GM12878 (cell line): ENCODE measurements at regions of chr3 and their contacts with region 1.

Region 1: GRCh38 chr3:152480282-152480953 is 211.7 kb downstream of the MBNL1 start:
- DNase-seq: peak; percentile 77
- ATAC-seq: peak; percentile 86
- H3K4me3 ChIP-seq: peak overlapping the region; percentile 34; the same call in 1 of the 2 replicates
- H3K27ac ChIP-seq: peak overlapping the region; percentile 87
- H3K4me1 ChIP-seq: peaks cover 13% of the 10 kb centered on the region; the same call in 1 of the 2 replicates
- H3K27me3 ChIP-seq: no peaks in the 10 kb centered on the region
- CTCF ChIP-seq: no peak
- EP300 ChIP-seq: peak; percentile 94 to 95
- POLR2A ChIP-seq: no peak
- RAD21 ChIP-seq: no peak

Region 2: GRCh38 chr3:152193673-152194267 is 286.6 kb before region 1 on chr3:
- CTCF ChIA-PET with region 1: no interaction called
- POLR2A ChIA-PET with region 1: no interaction called
- RAD21 ChIA-PET with region 1: no interaction called
- SMC1A ChIA-PET with region 1: no interaction called
- in situ Hi-C with region 1: no loop called
- intact Hi-C with region 1: no loop called
- DNase-seq: no peak
- ATAC-seq: peak; percentile 67
- H3K4me3 ChIP-seq: peak overlapping the region; percentile 44; the same call in 1 of the 2 replicates
- H3K27ac ChIP-seq: peak overlapping the region; percentile 48; the same call in 1 of the 2 replicates
- H3K4me1 ChIP-seq: peaks cover 29% of the 10 kb centered on the region
- H3K27me3 ChIP-seq: no peaks in the 10 kb centered on the region
- CTCF ChIP-seq: no peak
- EP300 ChIP-seq: no peak
- POLR2A ChIP-seq: no peak
- RAD21 ChIP-seq: no peak; the same call in 1 of the 2 replicates

Region 3: DNA sequence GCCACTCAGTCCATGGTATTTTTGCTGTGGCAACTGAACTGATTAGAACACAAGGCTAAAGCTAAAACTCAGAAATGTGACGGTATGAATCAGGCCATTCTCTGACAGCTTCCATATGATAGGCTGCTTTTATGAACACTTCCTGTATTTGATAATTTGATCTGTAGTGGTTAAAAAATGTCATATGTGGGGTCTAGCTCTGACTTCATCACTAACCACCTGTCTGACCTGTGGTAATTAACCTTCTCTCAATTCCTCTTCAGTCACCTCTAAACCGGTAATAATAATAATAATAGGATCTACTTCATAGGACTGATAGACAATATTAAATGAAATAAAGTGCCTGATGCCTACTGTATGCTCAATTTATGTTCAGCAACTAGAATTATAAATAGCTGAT is 11.5 kb after region 1 on chr3:
- CTCF ChIA-PET with region 1: interaction called, 7 read pairs
- POLR2A ChIA-PET with region 1: interaction called, 4 read pairs
- RAD21 ChIA-PET with region 1: interaction called, 14 read pairs
- SMC1A ChIA-PET with region 1: interaction called, 29 read pairs
- in situ Hi-C with region 1: no loop called
- intact Hi-C with region 1: loop called (anchors 2 kb)
- DNase-seq: no peak
- ATAC-seq: peak; percentile 93
- H3K4me3 ChIP-seq: no peak overlapping the region
- H3K27ac ChIP-seq: no peak overlapping the region
- H3K4me1 ChIP-seq: peaks cover 5% of the 10 kb centered on the region; the same call in 1 of the 2 replicates
- H3K27me3 ChIP-seq: no peaks in the 10 kb centered on the region
- CTCF ChIP-seq: no peak
- EP300 ChIP-seq: peak; percentile 69 to 83
- POLR2A ChIP-seq: no peak
- RAD21 ChIP-seq: no peak

Region 4: GRCh38 chr3:152497457-152497856 is 17.0 kb after region 1 on chr3:
- CTCF ChIA-PET with region 1: interaction called, 379 read pairs
- POLR2A ChIA-PET with region 1: interaction called, 3 read pairs
- RAD21 ChIA-PET with region 1: interaction called, 14 read pairs
- SMC1A ChIA-PET with region 1: interaction called, 29 read pairs
- in situ Hi-C with region 1: no loop called
- intact Hi-C with region 1: loop called (anchors 2 kb)
- DNase-seq: no peak
- ATAC-seq: no peak
- H3K4me3 ChIP-seq: peak overlapping the region; percentile 13; the same call in 1 of the 2 replicates
- H3K27ac ChIP-seq: peak overlapping the region; percentile 50
- H3K4me1 ChIP-seq: no peaks in the 10 kb centered on the region; the same call in 1 of the 2 replicates
- H3K27me3 ChIP-seq: no peaks in the 10 kb centered on the region
- CTCF ChIP-seq: no peak
- EP300 ChIP-seq: no peak
- POLR2A ChIP-seq: no peak
- RAD21 ChIP-seq: no peak

Region 5: DNA sequence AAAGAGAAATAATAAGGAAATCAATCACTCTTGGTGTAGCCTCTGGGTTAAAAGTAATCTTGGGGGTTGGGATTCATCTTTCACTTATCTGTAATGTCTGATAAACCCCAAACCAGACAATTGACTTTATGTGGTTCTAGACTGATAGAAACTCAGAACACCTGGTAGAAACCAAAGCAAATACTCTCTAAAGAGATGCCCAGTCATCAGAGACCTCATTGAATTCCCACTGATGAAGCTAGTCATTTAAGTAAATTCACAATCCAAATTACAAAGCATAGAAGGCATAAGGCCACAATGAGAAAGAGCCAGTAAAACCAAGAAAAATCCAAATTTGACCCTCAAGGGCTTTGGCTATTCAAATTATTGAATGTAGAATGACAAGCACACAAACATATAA is 39.0 kb after region 1 on chr3:
- CTCF ChIA-PET with region 1: interaction called, 379 read pairs
- POLR2A ChIA-PET with region 1: interaction called, 4 read pairs
- RAD21 ChIA-PET with region 1: interaction called, 84 read pairs
- SMC1A ChIA-PET with region 1: interaction called, 165 read pairs
- in situ Hi-C with region 1: loop called (anchors 10 kb)
- intact Hi-C with region 1: loop called (anchors 2 kb)
- DNase-seq: no peak
- ATAC-seq: peak; percentile 72
- H3K4me3 ChIP-seq: no peak overlapping the region
- H3K27ac ChIP-seq: no peak overlapping the region
- H3K4me1 ChIP-seq: peaks cover 5% of the 10 kb centered on the region
- H3K27me3 ChIP-seq: no peaks in the 10 kb centered on the region
- CTCF ChIP-seq: no peak
- EP300 ChIP-seq: no peak; a peak in 1 of 4 replicates
- POLR2A ChIP-seq: no peak
- RAD21 ChIP-seq: no peak

Region 6: GRCh38 chr3:152574461-152575079 is 94.2 kb after region 1 on chr3:
- CTCF ChIA-PET with region 1: interaction called, 33 read pairs
- POLR2A ChIA-PET with region 1: no interaction called
- RAD21 ChIA-PET with region 1: interaction called, 18 read pairs
- SMC1A ChIA-PET with region 1: interaction called, 20 read pairs
- in situ Hi-C with region 1: loop called (anchors 5 kb)
- intact Hi-C with region 1: no loop called
- DNase-seq: peak; percentile 26
- ATAC-seq: peak; percentile 95
- H3K4me3 ChIP-seq: no peak overlapping the region
- H3K27ac ChIP-seq: no peak overlapping the region
- H3K4me1 ChIP-seq: no peaks in the 10 kb centered on the region; the same call in 1 of the 2 replicates
- H3K27me3 ChIP-seq: no peaks in the 10 kb centered on the region
- CTCF ChIP-seq: peak; percentile 38 to 69 (median 52); a peak in 5 of 6 replicates
- EP300 ChIP-seq: no peak
- POLR2A ChIP-seq: no peak
- RAD21 ChIP-seq: peak; percentile 87

Region 7: GRCh38 chr3:152656214-152656971 is 176.0 kb after region 1 on chr3:
- CTCF ChIA-PET with region 1: no interaction called
- POLR2A ChIA-PET with region 1: no interaction called
- RAD21 ChIA-PET with region 1: no interaction called
- SMC1A ChIA-PET with region 1: no interaction called
- in situ Hi-C with region 1: no loop called
- intact Hi-C with region 1: no loop called
- DNase-seq: no peak
- ATAC-seq: no peak
- H3K4me3 ChIP-seq: no peak overlapping the region
- H3K27ac ChIP-seq: no peak overlapping the region
- H3K4me1 ChIP-seq: no peaks in the 10 kb centered on the region
- H3K27me3 ChIP-seq: no peaks in the 10 kb centered on the region
- CTCF ChIP-seq: no peak
- EP300 ChIP-seq: no peak
- POLR2A ChIP-seq: no peak
- RAD21 ChIP-seq: no peak

Region 8: DNA sequence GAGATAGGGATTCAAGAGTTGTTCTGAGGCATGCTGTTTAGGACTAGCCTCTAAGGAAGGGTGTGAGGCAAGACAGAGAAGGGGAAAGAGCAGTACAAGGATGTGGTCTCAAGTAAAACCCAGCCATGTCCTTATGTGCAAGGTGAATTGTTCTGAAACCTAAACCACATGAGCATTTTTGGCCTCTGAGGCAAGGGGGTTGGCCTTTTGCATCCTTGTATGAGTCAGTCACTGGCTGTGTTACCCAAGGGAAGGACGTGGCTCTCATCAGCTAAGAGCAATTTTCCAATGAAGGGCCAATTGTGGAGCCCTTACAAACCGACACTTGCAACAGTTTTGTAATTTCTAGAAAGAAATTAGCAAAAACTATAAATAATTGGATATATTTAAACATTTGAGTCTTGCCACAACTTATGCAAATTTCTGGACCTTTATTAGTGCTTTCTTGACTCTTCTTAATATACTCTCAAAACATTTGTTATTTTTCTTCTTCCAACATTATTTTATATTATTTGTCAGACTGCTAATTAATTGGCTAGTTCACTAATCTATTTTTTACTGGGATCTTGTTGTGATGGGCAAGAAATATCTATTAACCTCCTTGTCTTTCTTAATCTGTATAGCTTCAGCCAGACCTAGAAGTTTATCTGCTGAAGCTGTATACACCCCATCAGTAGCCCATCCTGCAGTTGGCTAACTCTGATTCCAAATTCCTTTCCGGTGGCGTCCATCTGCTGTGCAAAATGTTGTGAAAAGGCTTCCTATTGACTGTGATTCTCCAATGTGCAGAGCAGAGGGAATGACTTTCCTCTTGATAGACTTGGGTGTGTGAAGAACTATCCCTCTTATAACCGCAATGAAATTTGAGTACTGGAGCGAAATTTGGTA is 256.8 kb after region 1 on chr3:
- CTCF ChIA-PET with region 1: no interaction called
- POLR2A ChIA-PET with region 1: no interaction called
- RAD21 ChIA-PET with region 1: no interaction called
- SMC1A ChIA-PET with region 1: no interaction called
- in situ Hi-C with region 1: no loop called
- intact Hi-C with region 1: loop called (anchors 5 kb)
- DNase-seq: peak; percentile 96
- ATAC-seq: peak; percentile 99
- H3K4me3 ChIP-seq: no peak overlapping the region
- H3K27ac ChIP-seq: peak overlapping the region; percentile 45; the same call in 1 of the 2 replicates
- H3K4me1 ChIP-seq: peaks cover 20% of the 10 kb centered on the region
- H3K27me3 ChIP-seq: no peaks in the 10 kb centered on the region
- CTCF ChIP-seq: no peak
- EP300 ChIP-seq: peak; percentile 84 to 89
- POLR2A ChIP-seq: no peak
- RAD21 ChIP-seq: 0 out of 2 replicates have a peak, but pooled peaks have one; percentile 1